CD4-positive, alpha-beta T cell (primary cell): ENCODE measurements at regions of chr6 and their contacts with region 1.

Region 1: GRCh38 chr6:42390228-42390934 is 61.3 kb downstream of the TRERF1 start:
- DNase-seq: peak in 13 of 14 experiments; percentile 26 to 87 (median 48)
- ATAC-seq: peak; percentile 80
- H3K4me3 ChIP-seq: peak overlapping the region; percentile 35
- H3K4me3 Mint-ChIP-seq: peak overlapping the region; percentile 73
- H3K27ac ChIP-seq: peak overlapping the region; percentile 78 to 89
- H3K27ac Mint-ChIP-seq: peak overlapping the region; percentile 99
- H3K4me1 ChIP-seq: peaks cover 94% of the 10 kb centered on the region
- H3K4me1 Mint-ChIP-seq: peaks cover 98% of the 10 kb centered on the region
- H3K27me3 ChIP-seq: no peaks in the 10 kb centered on the region
- H3K27me3 Mint-ChIP-seq: no peaks in the 10 kb centered on the region
- CTCF ChIP-seq: no peak

Region 2: GRCh38 chr6:42367353-42368011 is 22.9 kb before region 1 on chr6:
- CTCF ChIA-PET with region 1: interaction called, 3 read pairs
- POLR2A ChIA-PET with region 1: interaction called, 60 read pairs
- intact Hi-C with region 1: loop called (anchors 1 to 2 kb)
- DNase-seq: peak in 6 of 14 experiments; percentile 4 to 74 (median 51)
- ATAC-seq: peak; percentile 57
- H3K4me3 ChIP-seq: peak overlapping the region; percentile 36
- H3K4me3 Mint-ChIP-seq: peak overlapping the region; percentile 84
- H3K27ac ChIP-seq: peak overlapping the region; percentile 71 to 74
- H3K27ac Mint-ChIP-seq: peak overlapping the region; percentile 94
- H3K4me1 ChIP-seq: peaks cover 67% of the 10 kb centered on the region
- H3K4me1 Mint-ChIP-seq: peaks cover 80% of the 10 kb centered on the region
- H3K27me3 ChIP-seq: no peaks in the 10 kb centered on the region
- H3K27me3 Mint-ChIP-seq: no peaks in the 10 kb centered on the region
- CTCF ChIP-seq: no peak

Region 3: GRCh38 chr6:42402184-42402583 is 11.8 kb after region 1 on chr6:
- CTCF ChIA-PET with region 1: interaction called, 4 read pairs
- POLR2A ChIA-PET with region 1: interaction called, 55 read pairs
- intact Hi-C with region 1: no loop called
- DNase-seq: peak in 6 of 14 experiments; percentile 8 to 52 (median 48)
- ATAC-seq: peak; percentile 47
- H3K4me3 ChIP-seq: no peak overlapping the region
- H3K4me3 Mint-ChIP-seq: no peak overlapping the region
- H3K27ac ChIP-seq: no peak overlapping the region
- H3K27ac Mint-ChIP-seq: peak overlapping the region; percentile 81
- H3K4me1 ChIP-seq: peaks cover 70% of the 10 kb centered on the region
- H3K4me1 Mint-ChIP-seq: peaks cover 86% of the 10 kb centered on the region
- H3K27me3 ChIP-seq: no peaks in the 10 kb centered on the region
- H3K27me3 Mint-ChIP-seq: no peaks in the 10 kb centered on the region
- CTCF ChIP-seq: no peak

Region 4: DNA sequence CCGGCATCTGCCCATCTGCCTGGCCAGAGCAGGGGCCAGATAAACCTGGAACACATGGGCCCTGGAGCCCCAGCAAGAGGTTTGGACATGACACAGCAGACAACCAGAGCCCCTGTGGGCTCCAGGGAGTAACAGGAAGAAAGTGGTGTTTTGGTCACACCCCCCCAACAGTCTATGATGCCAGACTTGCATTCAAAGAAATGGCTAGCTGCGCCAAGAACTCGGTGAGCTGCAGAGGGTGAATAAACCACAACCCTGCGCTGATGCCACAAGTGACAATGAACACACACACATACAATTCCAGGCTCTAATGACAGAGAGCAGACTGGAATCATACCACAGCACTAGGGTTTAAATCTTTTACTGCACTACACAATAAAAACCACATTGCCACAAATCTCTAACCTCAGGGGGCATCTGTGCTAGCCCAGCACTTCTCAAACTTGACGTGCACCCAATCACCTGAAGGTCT is 27.3 kb after region 1 on chr6:
- CTCF ChIA-PET with region 1: interaction called, 3 read pairs
- POLR2A ChIA-PET with region 1: interaction called, 21 read pairs
- intact Hi-C with region 1: loop called in 1 of 2 experiments (anchors 1 kb)
- DNase-seq: peak in 13 of 14 experiments; percentile 12 to 80 (median 30)
- ATAC-seq: peak; percentile 89
- H3K4me3 ChIP-seq: no peak overlapping the region
- H3K4me3 Mint-ChIP-seq: peak overlapping the region; percentile 53
- H3K27ac ChIP-seq: no peak overlapping the region
- H3K27ac Mint-ChIP-seq: peak overlapping the region; percentile 72
- H3K4me1 ChIP-seq: peaks cover 37% of the 10 kb centered on the region
- H3K4me1 Mint-ChIP-seq: peaks cover 70% of the 10 kb centered on the region
- H3K27me3 ChIP-seq: no peaks in the 10 kb centered on the region
- H3K27me3 Mint-ChIP-seq: no peaks in the 10 kb centered on the region
- CTCF ChIP-seq: no peak

Region 5: DNA sequence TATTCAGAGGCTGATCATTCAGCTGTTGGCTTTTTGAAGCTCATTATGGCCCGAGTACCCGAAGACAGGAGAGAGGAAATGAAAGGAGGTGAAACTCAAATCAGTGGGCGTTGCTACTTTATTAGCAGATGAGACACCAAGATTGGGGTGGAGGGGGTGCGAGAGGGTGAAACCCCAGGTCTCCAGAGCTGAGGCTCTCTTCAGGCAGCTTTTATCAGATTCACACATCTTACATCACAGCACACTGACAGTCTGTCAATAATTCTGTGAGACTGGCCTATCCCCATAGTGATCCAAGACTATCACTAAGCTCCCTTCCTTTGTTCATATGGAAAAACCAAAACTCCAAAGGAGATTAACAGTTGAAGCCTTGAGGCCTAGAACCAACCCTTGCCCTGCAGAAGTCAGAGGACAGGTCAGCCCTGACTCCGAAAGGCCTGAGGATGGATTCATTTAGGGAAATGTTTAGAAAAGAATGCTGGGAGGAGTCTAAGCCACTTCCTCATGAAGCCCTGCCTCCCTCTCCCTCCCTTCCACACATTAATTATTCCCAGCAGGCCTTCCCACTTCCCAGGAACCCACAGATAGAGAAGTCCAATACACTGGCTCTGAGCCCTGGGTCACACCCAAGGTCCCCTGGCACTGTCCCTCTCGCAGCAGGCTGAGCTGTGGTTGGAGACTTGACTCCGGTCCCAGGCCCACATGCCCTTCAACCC is 38.1 kb after region 1 on chr6:
- CTCF ChIA-PET with region 1: interaction called, 3 read pairs
- POLR2A ChIA-PET with region 1: interaction called, 21 read pairs
- intact Hi-C with region 1: no loop called
- DNase-seq: peak in 8 of 14 experiments; percentile 16 to 78 (median 44)
- ATAC-seq: peak; percentile 73
- H3K4me3 ChIP-seq: no peak overlapping the region
- H3K4me3 Mint-ChIP-seq: peak overlapping the region; percentile 61
- H3K27ac ChIP-seq: peak overlapping the region; percentile 24 to 52
- H3K27ac Mint-ChIP-seq: peak overlapping the region; percentile 87
- H3K4me1 ChIP-seq: peaks cover 47% of the 10 kb centered on the region
- H3K4me1 Mint-ChIP-seq: peaks cover 70% of the 10 kb centered on the region
- H3K27me3 ChIP-seq: no peaks in the 10 kb centered on the region
- H3K27me3 Mint-ChIP-seq: no peaks in the 10 kb centered on the region
- CTCF ChIP-seq: no peak

Region 6: GRCh38 chr6:42446370-42446769 is 56.0 kb after region 1 on chr6:
- CTCF ChIA-PET with region 1: interaction called, 4 read pairs
- POLR2A ChIA-PET with region 1: interaction called, 178 read pairs
- intact Hi-C with region 1: loop called (anchors 2 to 5 kb)
- DNase-seq: no peak
- ATAC-seq: no peak
- H3K4me3 ChIP-seq: no peak overlapping the region
- H3K4me3 Mint-ChIP-seq: peak overlapping the region; percentile 68
- H3K27ac ChIP-seq: no peak overlapping the region
- H3K27ac Mint-ChIP-seq: peak overlapping the region; percentile 84
- H3K4me1 ChIP-seq: peaks cover 62% of the 10 kb centered on the region
- H3K4me1 Mint-ChIP-seq: peaks cover 98% of the 10 kb centered on the region
- H3K27me3 ChIP-seq: no peaks in the 10 kb centered on the region
- H3K27me3 Mint-ChIP-seq: no peaks in the 10 kb centered on the region
- CTCF ChIP-seq: no peak

Region 7: DNA sequence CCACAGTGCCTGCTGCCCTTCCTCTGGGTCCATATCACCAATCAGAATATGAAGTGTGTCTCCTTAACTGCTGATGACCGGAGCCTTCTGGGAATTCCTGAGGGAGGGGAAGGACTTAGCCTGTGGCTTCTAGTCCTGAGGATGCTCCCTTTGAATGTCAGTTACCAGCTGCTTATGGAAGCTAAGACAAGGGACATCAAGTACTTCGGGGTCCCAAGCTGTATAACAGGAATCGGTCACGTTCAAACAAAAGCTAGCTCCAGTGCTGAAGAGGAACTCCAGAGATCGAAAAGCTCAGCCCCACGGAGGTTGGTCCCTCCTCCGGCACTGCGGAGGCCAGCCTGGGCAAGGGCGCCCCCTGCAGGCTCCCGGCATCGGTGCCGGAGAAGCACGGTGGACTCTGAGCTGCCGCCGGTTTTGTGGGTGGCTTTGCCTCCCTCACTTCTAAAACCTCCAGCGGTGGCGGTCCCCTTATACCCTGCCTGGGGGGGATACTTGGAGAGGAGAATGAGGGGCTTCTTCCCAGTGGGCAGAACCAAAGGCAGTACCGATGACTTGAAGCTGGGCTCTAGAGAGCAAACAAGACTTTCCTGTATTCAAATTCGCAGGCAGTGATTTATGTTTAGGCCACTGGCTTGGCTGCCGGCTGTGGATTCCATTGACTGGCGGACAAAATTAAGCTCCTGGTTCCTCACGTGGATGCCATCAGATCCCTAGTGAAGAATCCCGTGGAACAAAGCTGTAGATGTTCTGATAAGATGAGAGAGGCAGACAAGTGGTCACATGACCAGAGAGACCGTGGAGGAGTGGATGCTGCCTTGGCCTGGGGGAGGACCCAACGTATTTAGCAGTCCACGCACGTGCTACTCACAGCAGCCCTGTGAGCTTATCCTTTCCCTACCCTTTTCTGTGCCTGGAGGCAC is 157.3 kb after region 1 on chr6:
- CTCF ChIA-PET with region 1: interaction called, 19 read pairs
- POLR2A ChIA-PET with region 1: interaction called, 12 read pairs
- intact Hi-C with region 1: no loop called
- DNase-seq: peak; percentile 72 to 91 (median 86)
- ATAC-seq: peak; percentile 98
- H3K4me3 ChIP-seq: peak overlapping the region; percentile 38
- H3K4me3 Mint-ChIP-seq: peak overlapping the region; percentile 66
- H3K27ac ChIP-seq: no peak overlapping the region
- H3K27ac Mint-ChIP-seq: peak overlapping the region; percentile 65
- H3K4me1 ChIP-seq: peaks cover 11% of the 10 kb centered on the region
- H3K4me1 Mint-ChIP-seq: peaks cover 12% of the 10 kb centered on the region
- H3K27me3 ChIP-seq: no peaks in the 10 kb centered on the region
- H3K27me3 Mint-ChIP-seq: peaks cover 13% of the 10 kb centered on the region
- CTCF ChIP-seq: peak; percentile 93